Dendritic cell treated with granulocyte-macrophage colony-stimulating factor and Interleukin-4, amounts not matched to agents 40 ng/mL and 50 ng/mL, for 4 days (primary cell): ENCODE measurements at regions of chr4 and their contacts with region 1.

Region 1: DNA sequence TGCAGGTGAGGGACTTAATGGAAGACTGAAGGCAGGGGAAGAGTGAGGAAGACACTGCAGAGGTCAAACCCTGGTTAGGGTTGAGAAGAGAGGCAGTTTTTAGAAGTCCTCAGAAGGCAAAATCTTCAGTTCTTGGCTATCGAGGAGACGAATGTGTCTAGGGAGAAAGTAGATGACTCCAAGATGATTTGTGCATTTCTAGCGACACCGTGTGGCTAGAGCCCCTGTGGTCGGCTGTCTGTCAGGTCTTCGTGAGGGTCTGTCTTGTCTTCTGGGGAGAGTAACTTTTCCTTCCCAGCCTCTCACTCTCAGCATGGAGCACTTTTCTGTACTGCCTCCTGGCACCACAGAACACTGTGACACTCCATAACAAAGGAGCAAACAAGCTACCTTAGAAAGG is 458.1 kb downstream of the STIM2 start:
- H3K4me3 Mint-ChIP-seq: no peak overlapping the region
- H3K27ac Mint-ChIP-seq: no peak overlapping the region
- H3K4me1 Mint-ChIP-seq: peaks cover 8% of the 10 kb centered on the region
- H3K27me3 Mint-ChIP-seq: peaks cover 5% of the 10 kb centered on the region

Region 2: GRCh38 chr4:27048429-27049238 is 270.1 kb before region 1 on chr4:
- intact Hi-C with region 1: loop called (anchors 2 kb)
- H3K4me3 Mint-ChIP-seq: peak overlapping the region; percentile 42
- H3K27ac Mint-ChIP-seq: no peak overlapping the region
- H3K4me1 Mint-ChIP-seq: peaks cover 4% of the 10 kb centered on the region
- H3K27me3 Mint-ChIP-seq: peaks cover 76% of the 10 kb centered on the region